ENCODE measurements at regions of chr15 and their contacts with region 1.

Region 1: GRCh38 chr15:79041601-79042168 is 48.9 kb downstream of the RASGRF1 start:
- DNase-seq: no peak
- ATAC-seq: no peak
- H3K4me3 Mint-ChIP-seq: no peak overlapping the region
- H3K27ac Mint-ChIP-seq: no peak overlapping the region
- H3K4me1 Mint-ChIP-seq: no peaks in the 10 kb centered on the region
- H3K27me3 Mint-ChIP-seq: peaks cover 20% of the 10 kb centered on the region
- CTCF ChIP-seq: no peak

Region 2: DNA sequence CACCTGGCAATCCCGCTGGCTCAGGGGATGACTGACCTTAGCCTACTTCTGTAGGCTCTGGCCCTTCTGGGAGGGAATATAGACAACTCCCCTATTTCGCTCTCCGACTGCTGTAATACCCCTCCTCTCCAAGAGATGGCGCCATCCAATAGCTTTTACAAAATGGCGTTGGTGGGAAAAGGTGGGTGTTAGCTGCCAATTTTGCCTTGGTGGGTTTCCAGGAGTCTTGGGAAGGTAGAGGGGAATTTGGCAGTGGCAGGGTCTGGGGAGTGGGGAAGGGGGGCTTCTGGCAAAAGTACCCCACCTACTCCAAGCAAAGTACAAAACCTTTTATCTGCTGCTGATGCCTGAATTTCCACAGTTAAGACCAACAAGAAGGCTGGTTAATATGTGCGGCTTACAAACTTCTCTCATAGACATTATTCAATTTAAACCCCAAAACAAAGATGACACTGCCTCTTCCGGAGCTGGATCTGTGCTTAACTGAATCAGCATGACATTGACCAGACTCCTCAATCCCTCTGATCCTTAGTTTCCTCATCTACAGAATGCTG is 13.2 kb before region 1 on chr15:
- CTCF ChIA-PET with region 1: interaction called, 10 read pairs
- POLR2A ChIA-PET with region 1: no interaction called
- intact Hi-C with region 1: no loop called
- DNase-seq: peak; percentile 61
- ATAC-seq: peak; percentile 67
- H3K4me3 Mint-ChIP-seq: no peak overlapping the region
- H3K27ac Mint-ChIP-seq: no peak overlapping the region
- H3K4me1 Mint-ChIP-seq: no peaks in the 10 kb centered on the region
- H3K27me3 Mint-ChIP-seq: peaks cover 9% of the 10 kb centered on the region
- CTCF ChIP-seq: peak; percentile 89

Measured in activated CD8-positive, alpha-beta T cell treated with anti-CD3 and anti-CD28 coated beads for 36 hours (primary cell).